Activated T-helper 1 cell treated with anti-CD3 and anti-CD28 coated beads, Interleukin-12 subunit alpha, Interleukin-12 subunit beta, Interleukin-2, Interleukin-4 antibody, amounts not matched to agents 30 ng/mL and 10 ng/mL and 1 ng/mL, durations not matched to agents 14 hours and 24 hours and 36 hours (primary cell): ENCODE measurements at regions of chr6 and their contacts with region 1.

Region 1: GRCh38 chr6:37940074-37940847 is 120.7 kb downstream of the ZFAND3 start:
- DNase-seq: no peak
- H3K4me3 Mint-ChIP-seq: no peak overlapping the region
- H3K27ac Mint-ChIP-seq: no peak overlapping the region
- H3K4me1 Mint-ChIP-seq: peaks cover 21% of the 10 kb centered on the region
- H3K27me3 Mint-ChIP-seq: no peaks in the 10 kb centered on the region

Region 2: DNA sequence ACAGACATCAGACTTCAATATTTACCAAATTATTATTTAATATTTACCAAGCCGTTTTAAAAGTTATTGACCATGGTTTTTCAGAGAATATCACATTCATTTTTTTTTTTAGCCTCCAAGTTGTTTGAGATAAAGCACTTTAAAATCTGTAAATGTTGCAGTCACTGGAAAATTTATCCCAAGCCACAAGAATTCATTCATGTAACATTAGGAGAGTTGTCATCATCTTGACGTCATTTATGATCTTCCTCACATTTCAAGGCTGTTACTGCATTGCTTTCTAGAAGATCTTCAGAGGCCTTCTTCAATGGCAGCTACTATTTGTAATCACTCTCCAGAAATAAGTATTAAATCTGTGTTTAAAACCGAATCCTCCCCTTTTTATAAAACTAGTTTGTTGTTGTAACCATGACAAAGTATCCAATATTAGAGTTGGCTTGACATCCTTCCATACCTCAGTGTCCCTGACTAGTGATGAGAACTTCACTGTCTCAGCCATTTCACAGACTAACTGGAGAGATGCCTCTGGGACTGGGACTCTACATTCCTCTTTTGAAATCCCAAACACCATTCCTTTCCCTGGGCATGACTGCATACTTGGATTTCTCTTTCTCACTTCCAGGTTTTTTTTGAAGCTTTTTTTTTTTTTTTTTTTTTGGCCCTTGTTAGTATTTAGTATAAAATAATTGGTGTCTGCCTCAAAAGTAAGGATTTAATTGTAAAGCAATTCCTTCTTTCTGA is 20.7 kb before region 1 on chr6:
- intact Hi-C with region 1: no loop called
- DNase-seq: no peak
- H3K4me3 Mint-ChIP-seq: no peak overlapping the region
- H3K27ac Mint-ChIP-seq: no peak overlapping the region
- H3K4me1 Mint-ChIP-seq: peaks cover 14% of the 10 kb centered on the region
- H3K27me3 Mint-ChIP-seq: no peaks in the 10 kb centered on the region

Region 3: DNA sequence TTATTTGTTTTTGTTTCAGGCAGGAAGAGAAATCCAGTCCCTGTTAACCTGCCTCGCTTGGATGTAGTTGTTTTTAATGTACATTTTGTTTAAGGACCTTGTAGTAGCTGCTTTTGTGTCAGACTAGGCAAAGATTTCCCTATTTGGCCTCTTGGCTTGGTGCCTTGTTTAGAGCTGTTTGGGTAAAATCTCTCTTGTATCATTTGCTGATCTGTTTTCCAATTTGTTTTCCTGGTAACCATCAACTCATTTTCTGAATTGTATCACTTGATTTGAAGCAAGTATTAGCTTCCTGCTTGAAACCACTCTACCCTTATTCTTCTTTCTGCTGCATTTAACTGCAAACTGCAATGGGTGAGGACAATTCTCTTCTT is 39.9 kb after region 1 on chr6:
- intact Hi-C with region 1: loop called (anchors 5 kb)
- DNase-seq: no peak
- H3K4me3 Mint-ChIP-seq: no peak overlapping the region
- H3K27ac Mint-ChIP-seq: no peak overlapping the region
- H3K4me1 Mint-ChIP-seq: peaks cover 47% of the 10 kb centered on the region
- H3K27me3 Mint-ChIP-seq: no peaks in the 10 kb centered on the region